Dendritic cell treated with granulocyte-macrophage colony-stimulating factor and Interleukin-4, amounts not matched to agents 40 ng/mL and 50 ng/mL, for 4 days (primary cell): ENCODE measurements at regions of chr5 and their contacts with region 1.

Region 1: DNA sequence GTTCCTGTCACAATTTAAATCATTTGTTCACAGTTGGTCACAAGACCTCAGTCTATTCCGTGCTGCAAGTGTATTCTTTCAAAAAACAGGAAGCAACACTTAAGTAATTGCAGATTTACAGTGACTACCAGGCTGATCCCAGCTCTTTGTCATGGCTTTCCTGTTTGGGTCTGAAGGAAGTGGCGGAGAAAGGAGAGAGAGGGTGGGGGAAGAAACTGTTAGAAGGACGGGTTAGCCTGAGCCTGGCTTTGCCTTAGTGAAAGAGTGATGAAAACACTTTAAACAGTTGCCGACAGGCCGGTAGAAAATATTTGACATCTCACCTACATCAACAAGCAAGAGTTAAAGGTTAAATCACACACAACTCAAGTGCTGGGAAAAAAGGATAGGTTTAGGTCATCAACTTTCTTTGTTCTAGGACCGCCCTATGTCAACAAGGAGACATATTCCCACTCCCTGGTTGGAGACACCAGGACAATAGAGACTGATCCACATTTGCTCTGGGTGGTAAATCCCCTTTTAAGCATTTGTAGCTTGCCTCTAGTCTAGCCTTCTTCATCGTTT is 102.2 kb upstream of the DAB2 start:
- H3K4me3 Mint-ChIP-seq: peak overlapping the region; percentile 30
- H3K27ac Mint-ChIP-seq: peak overlapping the region; percentile 89
- H3K4me1 Mint-ChIP-seq: peaks cover 27% of the 10 kb centered on the region
- H3K27me3 Mint-ChIP-seq: no peaks in the 10 kb centered on the region

Region 2: DNA sequence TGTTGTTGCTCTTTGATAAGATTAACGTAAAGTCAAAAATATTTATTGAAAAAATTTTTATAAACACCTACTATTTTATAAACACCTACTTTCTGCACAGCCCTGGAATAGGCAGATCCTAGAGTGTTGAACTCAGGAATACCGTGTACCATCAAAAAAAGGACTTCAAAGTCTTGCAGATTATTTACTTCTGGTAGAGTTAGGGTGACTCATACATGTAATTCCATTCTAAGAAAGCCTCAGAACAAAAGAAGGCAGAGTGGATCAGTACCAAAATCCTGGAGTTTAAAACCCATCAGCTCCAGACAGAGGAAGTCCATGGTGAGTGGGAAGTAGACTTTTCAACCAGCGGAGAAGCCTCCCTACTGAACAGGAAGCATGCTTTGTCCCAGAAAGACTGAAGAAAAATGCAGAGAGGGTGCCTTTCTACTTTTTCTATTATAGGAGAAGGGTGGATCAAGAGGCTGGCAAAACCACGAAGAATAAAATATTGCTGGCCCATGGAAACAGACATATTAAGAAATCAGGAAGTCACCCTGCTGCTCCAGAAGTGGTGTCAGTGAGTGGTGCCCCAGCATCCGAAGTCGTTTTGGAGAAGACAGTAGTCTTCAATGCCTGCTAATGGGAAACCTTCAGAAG is 57.1 kb before region 1 on chr5:
- intact Hi-C with region 1: loop called (anchors 5 kb)
- H3K4me3 Mint-ChIP-seq: no peak overlapping the region
- H3K27ac Mint-ChIP-seq: peak overlapping the region; percentile 89
- H3K4me1 Mint-ChIP-seq: peaks cover 64% of the 10 kb centered on the region
- H3K27me3 Mint-ChIP-seq: no peaks in the 10 kb centered on the region

Region 3: DNA sequence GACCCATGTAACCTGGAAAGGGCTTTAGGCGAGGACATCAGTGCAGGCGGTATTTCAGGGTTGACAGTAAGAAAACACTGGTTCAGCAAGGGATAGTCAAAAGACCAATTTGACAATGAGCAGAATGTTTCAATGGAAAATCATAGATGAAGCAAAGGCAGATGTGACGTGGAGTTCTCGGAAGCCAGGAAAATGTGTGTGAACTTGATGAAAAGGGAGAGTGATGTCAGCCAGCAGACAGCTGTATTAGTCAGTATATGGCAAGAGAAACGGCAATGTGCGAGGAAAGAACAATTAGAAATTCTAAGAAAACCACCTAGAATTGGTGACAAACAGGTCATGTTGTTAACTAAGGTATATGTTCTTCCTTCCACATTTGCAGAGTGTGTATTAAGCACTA is 401.7 kb after region 1 on chr5:
- intact Hi-C with region 1: no loop called
- H3K4me3 Mint-ChIP-seq: no peak overlapping the region
- H3K27ac Mint-ChIP-seq: no peak overlapping the region
- H3K4me1 Mint-ChIP-seq: no peaks in the 10 kb centered on the region
- H3K27me3 Mint-ChIP-seq: no peaks in the 10 kb centered on the region